ENCODE measurements at regions of chr6 and their contacts with region 1.

Region 1: GRCh38 chr6:36724514-36725390 is 27.1 kb downstream of the RAB44 start:
- DNase-seq: no peak
- H3K4me3 ChIP-seq: no peak overlapping the region
- CTCF ChIP-seq: peak; percentile 52

Region 2: GRCh38 chr6:36459501-36459900 is 265.3 kb before region 1 on chr6:
- CTCF ChIA-PET with region 1: no interaction called
- POLR2A ChIA-PET with region 1: no interaction called
- DNase-seq: no peak
- H3K4me3 ChIP-seq: no peak overlapping the region
- CTCF ChIP-seq: no peak

Region 3: GRCh38 chr6:36735110-36736071 is 10.6 kb after region 1 on chr6:
- CTCF ChIA-PET with region 1: interaction called, 34 read pairs
- POLR2A ChIA-PET with region 1: no interaction called
- DNase-seq: peak; percentile 91
- H3K4me3 ChIP-seq: peak overlapping the region; percentile 42
- CTCF ChIP-seq: peak; percentile 23

Region 4: GRCh38 chr6:36752886-36753506 is 28.2 kb after region 1 on chr6:
- CTCF ChIA-PET with region 1: interaction called, 39 read pairs
- POLR2A ChIA-PET with region 1: no interaction called
- DNase-seq: no peak
- H3K4me3 ChIP-seq: no peak overlapping the region
- CTCF ChIP-seq: no peak